Sigmoid colon (tissue), 7 donors: ENCODE measurements at regions of chr5 and their contacts with region 1.

Region 1: DNA sequence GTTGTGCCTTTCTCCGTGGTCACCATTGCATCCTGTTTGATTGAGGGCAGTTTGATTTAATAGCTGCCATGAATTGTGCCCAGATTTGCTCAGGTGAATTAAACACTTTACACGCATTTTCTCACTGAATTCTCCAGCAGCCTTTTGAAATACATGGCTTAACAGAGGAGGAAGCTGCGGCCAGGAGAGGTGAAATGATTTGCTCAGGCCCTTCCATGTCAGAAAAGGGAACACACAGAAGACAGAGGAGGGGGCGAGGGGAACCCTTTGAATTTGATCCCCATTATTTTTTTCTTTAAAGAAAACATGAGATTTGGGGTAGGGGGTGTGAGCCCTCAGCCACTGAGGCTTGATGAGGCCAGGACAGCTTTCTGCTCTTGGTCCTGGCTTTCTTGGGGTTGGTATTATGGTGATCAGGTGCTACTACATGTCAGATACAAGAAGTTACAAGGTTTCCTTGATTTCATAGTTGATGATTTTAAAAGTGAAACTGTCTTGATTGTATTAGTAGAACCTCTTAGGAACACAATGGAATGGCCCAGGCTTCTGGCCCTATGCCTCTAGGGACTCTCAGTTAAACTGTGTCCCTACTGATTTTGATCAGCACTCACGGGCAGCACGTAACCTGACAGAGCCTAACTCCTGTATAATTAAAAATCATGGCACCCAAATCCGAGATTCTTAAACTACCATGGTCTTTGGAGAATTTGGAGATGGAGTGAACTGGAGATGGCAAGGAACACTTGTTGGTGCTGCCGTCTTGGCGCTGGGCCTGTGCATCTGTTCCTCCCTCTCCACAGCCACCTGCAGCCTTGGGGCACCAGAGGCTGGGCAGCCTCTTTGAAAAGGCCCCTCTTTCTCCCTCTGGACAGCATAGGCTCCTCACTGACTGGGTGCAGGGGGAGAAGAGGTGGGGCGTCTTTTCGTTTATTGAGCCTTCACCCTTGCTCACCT is 107.9 kb downstream of the TRIO start:
- DNase-seq: no peak
- H3K4me3 ChIP-seq: no peak overlapping the region
- H3K27ac ChIP-seq: peak overlapping the region; percentile 62 to 75 (median 68)
- H3K4me1 ChIP-seq: peaks cover 0 to 72% (median 55%) of the 10 kb centered on the region in 4 donors
- H3K27me3 ChIP-seq: no peaks in the 10 kb centered on the region
- CTCF ChIP-seq: no peak
- EP300 ChIP-seq: no peak
- POLR2A ChIP-seq: no peak

Region 2: DNA sequence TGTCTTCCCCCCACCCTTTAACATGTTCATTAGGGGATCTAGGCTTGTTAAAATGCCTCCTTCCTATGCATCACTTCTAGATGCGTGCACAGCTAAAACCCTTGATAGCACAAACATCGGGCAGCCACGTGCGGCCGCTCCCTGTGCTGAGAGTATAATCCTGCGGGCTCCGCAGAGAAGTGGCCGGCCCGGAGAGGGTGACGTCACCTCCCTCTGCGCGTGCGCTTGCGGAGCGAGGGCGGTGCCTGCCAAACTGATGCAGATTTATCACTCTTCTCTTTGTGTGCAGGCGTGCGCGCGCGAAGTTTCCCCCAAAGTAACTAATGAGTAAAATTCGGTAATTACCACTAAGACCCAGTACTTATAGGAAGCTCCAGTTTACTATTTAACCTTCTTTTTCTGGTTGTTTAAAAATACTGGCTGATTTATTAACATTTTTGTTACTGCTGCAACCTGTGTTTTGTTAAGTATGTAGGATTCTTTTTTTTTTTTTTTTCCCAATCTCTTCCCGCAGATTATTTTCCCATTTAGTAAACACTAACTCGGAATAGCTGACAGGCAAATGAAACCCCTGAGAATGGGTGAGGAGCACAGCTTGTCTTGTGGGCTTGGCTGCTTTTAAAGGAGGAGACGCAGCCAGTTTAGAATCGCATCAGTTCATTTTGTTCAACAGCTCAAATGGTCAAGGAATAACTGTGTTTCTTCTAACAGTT is 13.7 kb after region 1 on chr5:
- intact Hi-C with region 1: loop called (anchors 1 kb)
- DNase-seq: peak; percentile 97
- H3K4me3 ChIP-seq: peak overlapping the region in 3 of 4 donors; percentile 19 to 38 (median 32)
- H3K27ac ChIP-seq: peak overlapping the region; percentile 53 to 82 (median 70)
- H3K4me1 ChIP-seq: peaks cover 0 to 80% (median 61%) of the 10 kb centered on the region in 4 donors
- H3K27me3 ChIP-seq: no peaks in the 10 kb centered on the region
- CTCF ChIP-seq: no peak
- EP300 ChIP-seq: peak in 1 of 4 donors; percentile 47
- POLR2A ChIP-seq: no peak